ENCODE measurements at regions of chr3 and their contacts with region 1.

Region 1: GRCh38 chr3:127455541-127456450 is 134.7 kb downstream of the TPRA1 start:
- DNase-seq: peak; percentile 2 to 34 (median 15)
- H3K4me3 ChIP-seq: no peak overlapping the region
- H3K4me3 Mint-ChIP-seq: peak overlapping the region in 1 of 2 donors; percentile 75
- H3K27ac ChIP-seq: no peak overlapping the region
- H3K27ac Mint-ChIP-seq: no peak overlapping the region
- H3K4me1 ChIP-seq: peaks cover 0 to 6% of the 10 kb centered on the region in 2 donors
- H3K4me1 Mint-ChIP-seq: peaks cover 4% of the 10 kb centered on the region
- H3K27me3 ChIP-seq: peaks cover 33 to 54% of the 10 kb centered on the region in 2 donors
- H3K27me3 Mint-ChIP-seq: peaks cover 52 to 70% (median 55%) of the 10 kb centered on the region in 3 donors
- CTCF ChIP-seq: peak; percentile 80

Region 2: DNA sequence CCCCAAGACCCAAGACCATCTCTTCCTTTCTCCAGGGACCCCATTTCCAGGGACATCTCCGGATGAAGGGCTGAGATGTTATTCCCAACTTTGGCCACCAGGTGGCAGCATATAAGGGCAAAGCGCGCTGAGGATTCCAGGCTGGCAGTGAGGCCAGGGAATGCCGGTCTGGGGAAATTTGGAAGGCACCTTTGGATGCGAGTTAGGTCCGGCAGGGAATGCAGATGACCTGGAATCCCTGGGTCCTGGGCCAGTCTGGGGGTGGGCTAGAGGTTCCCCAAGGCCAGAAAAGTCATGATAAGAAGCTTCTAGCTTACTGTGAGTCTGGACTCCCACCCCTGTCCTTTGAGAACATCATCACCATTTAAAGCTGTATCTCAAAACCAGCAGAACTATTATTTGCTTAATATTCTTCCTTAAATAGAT is 933.4 kb before region 1 on chr3:
- intact Hi-C with region 1: loop called (anchors 10 kb)
- DNase-seq: peak; percentile 23 to 54 (median 52)
- H3K4me3 ChIP-seq: no peak overlapping the region
- H3K4me3 Mint-ChIP-seq: peak overlapping the region in 1 of 2 donors; percentile 42
- H3K27ac ChIP-seq: no peak overlapping the region
- H3K27ac Mint-ChIP-seq: no peak overlapping the region
- H3K4me1 ChIP-seq: peaks cover 44 to 50% of the 10 kb centered on the region in 2 donors
- H3K4me1 Mint-ChIP-seq: peaks cover 41% of the 10 kb centered on the region
- H3K27me3 ChIP-seq: no peaks in the 10 kb centered on the region
- H3K27me3 Mint-ChIP-seq: peaks cover 0 to 8% (median 0%) of the 10 kb centered on the region in 3 donors
- CTCF ChIP-seq: peak; percentile 95

Region 3: DNA sequence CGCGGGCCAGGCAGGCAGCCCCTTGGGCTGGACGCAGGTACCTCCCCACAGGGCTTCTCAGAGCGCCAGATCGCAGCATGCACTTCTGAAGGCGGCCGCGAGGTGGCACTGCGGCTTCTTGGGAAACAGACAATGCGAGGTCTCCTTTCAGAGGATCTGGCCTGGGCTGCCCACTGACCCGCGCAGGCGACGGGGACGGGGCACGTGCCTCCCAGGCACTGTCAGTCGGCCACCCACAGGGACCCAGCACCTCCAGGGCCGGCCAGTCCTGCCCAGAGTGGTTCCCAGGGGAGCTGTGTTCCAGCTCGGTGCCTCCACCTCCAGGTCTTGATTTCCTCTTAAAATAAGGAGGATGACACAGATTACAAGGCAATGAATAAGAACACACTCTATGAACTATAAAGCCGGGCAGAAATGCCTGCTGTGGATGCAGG is 776.5 kb before region 1 on chr3:
- intact Hi-C with region 1: loop called (anchors 5 kb)
- DNase-seq: peak; percentile 56 to 63 (median 63)
- H3K4me3 ChIP-seq: no peak overlapping the region
- H3K4me3 Mint-ChIP-seq: peak overlapping the region; percentile 11 to 79
- H3K27ac ChIP-seq: no peak overlapping the region
- H3K27ac Mint-ChIP-seq: peak overlapping the region in 1 of 7 donors; percentile 23
- H3K4me1 ChIP-seq: peaks cover 5 to 8% of the 10 kb centered on the region in 2 donors
- H3K4me1 Mint-ChIP-seq: peaks cover 8% of the 10 kb centered on the region
- H3K27me3 ChIP-seq: peaks cover 0 to 10% of the 10 kb centered on the region in 2 donors
- H3K27me3 Mint-ChIP-seq: peaks cover 13 to 22% (median 20%) of the 10 kb centered on the region in 3 donors
- CTCF ChIP-seq: peak; percentile 97

Region 4: GRCh38 chr3:126752303-126752842 is 703.4 kb before region 1 on chr3:
- intact Hi-C with region 1: loop called (anchors 10 kb)
- DNase-seq: peak; percentile 22 to 50 (median 26)
- H3K4me3 ChIP-seq: no peak overlapping the region
- H3K4me3 Mint-ChIP-seq: no peak overlapping the region
- H3K27ac ChIP-seq: no peak overlapping the region
- H3K27ac Mint-ChIP-seq: no peak overlapping the region
- H3K4me1 ChIP-seq: no peaks in the 10 kb centered on the region
- H3K4me1 Mint-ChIP-seq: no peaks in the 10 kb centered on the region
- H3K27me3 ChIP-seq: no peaks in the 10 kb centered on the region
- H3K27me3 Mint-ChIP-seq: peaks cover 0 to 2% (median 1%) of the 10 kb centered on the region in 3 donors
- CTCF ChIP-seq: peak; percentile 80

Region 5: GRCh38 chr3:127535901-127536829 is 80.4 kb after region 1 on chr3:
- intact Hi-C with region 1: no loop called
- DNase-seq: no peak
- H3K4me3 ChIP-seq: no peak overlapping the region
- H3K4me3 Mint-ChIP-seq: no peak overlapping the region
- H3K27ac ChIP-seq: no peak overlapping the region
- H3K27ac Mint-ChIP-seq: peak overlapping the region in 1 of 7 donors; percentile 5
- H3K4me1 ChIP-seq: no peaks in the 10 kb centered on the region
- H3K4me1 Mint-ChIP-seq: no peaks in the 10 kb centered on the region
- H3K27me3 ChIP-seq: no peaks in the 10 kb centered on the region
- H3K27me3 Mint-ChIP-seq: peaks cover 10 to 12% (median 11%) of the 10 kb centered on the region in 3 donors
- CTCF ChIP-seq: no peak